Caco-2 (cell line): ENCODE measurements at regions of chr2 and their contacts with region 1.

Region 1: DNA sequence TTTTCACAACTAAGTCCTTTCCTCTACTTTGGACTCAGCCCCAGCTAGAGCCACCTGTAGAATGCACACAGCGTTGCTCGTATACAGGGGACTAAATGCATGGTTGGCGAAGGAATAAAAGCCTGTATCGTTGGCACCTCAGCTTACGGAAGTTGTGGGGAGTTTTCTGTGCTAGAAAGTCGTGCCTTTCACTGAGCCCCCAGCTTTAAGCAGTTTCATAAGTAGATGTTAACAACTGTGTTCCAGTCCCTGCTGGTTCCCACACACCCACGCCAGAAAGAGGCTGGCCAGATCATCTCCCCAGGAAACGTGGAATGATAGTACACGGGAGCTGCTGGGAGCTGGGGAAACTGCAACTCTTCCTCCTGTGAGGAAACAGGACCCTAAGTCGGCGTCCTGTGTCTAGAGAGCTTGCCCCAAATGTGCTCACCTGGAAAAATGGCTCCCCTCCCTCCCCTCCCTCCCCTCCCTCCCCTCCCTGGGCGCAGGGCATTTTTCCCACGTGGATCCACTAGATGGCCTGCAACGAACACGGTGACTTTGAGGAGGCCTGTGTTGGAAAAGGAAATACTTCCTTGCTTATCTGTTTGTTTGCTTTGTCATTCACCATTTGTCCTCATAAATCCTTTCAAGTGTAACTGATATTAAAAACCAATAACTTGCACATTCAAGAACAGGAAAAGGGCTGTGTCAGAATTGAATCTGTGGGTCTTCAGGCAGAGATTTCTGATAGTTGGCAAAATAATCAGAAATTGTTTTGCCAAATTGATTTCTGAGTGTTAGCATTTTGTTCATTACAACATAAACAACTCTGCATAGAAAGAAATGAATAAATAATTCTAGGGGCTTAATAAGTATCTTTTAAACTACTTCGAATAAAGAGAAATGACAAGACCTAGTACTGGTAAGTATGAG is 43.9 kb upstream of the RFX8 start:
- DNase-seq: peak; percentile 75 to 77
- H3K4me3 ChIP-seq: peak overlapping the region; percentile 20
- H3K4me3 Mint-ChIP-seq: peak overlapping the region; percentile 38
- H3K27ac Mint-ChIP-seq: no peak overlapping the region
- H3K4me1 ChIP-seq: peaks cover 23% of the 10 kb centered on the region; the same call in 1 of the 2 replicates
- H3K4me1 Mint-ChIP-seq: peaks cover 22% of the 10 kb centered on the region
- H3K27me3 ChIP-seq: no peaks in the 10 kb centered on the region
- H3K27me3 Mint-ChIP-seq: no peaks in the 10 kb centered on the region
- CTCF ChIP-seq: peak; percentile 66 to 80

Region 2: DNA sequence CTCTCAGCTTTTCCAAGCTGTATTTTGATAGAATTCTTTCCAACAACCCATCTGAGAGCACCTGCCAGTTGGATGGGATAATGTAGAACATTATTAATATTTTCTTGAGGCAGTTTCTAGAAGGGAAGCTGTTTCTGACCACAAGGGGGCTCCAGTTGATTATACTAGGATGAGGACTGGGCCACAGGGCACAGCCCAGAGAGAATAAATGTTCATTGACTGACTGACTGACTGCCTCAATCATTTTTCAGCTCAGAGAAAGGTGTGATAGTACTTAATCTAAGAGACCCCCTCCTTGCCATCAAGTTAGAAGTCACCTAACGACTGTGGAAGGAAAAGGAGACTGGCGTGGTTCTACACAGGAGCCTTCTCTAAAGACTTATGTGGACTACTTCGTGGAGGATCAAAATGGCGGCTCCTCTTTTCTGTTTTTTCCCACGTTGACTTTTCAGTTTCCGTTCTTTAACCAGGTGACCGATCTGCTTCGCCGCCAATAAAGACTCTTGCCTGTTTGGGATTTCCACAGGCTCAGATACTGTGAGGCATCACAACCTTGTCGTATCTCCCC is 99.7 kb before region 1 on chr2:
- CTCF ChIA-PET with region 1: no interaction called
- POLR2A ChIA-PET with region 1: no interaction called
- intact Hi-C with region 1: loop called (anchors 1 kb)
- DNase-seq: peak in 1 of 2 experiments; percentile 69
- H3K4me3 ChIP-seq: no peak overlapping the region
- H3K4me3 Mint-ChIP-seq: no peak overlapping the region
- H3K27ac Mint-ChIP-seq: no peak overlapping the region
- H3K4me1 ChIP-seq: no peaks in the 10 kb centered on the region
- H3K4me1 Mint-ChIP-seq: no peaks in the 10 kb centered on the region
- H3K27me3 ChIP-seq: no peaks in the 10 kb centered on the region
- H3K27me3 Mint-ChIP-seq: no peaks in the 10 kb centered on the region
- CTCF ChIP-seq: peak; percentile 61

Region 3: GRCh38 chr2:101461381-101461780 is 57.5 kb before region 1 on chr2:
- CTCF ChIA-PET with region 1: no interaction called
- POLR2A ChIA-PET with region 1: no interaction called
- intact Hi-C with region 1: no loop called
- DNase-seq: no peak
- H3K4me3 ChIP-seq: no peak overlapping the region
- H3K4me3 Mint-ChIP-seq: no peak overlapping the region
- H3K27ac Mint-ChIP-seq: no peak overlapping the region
- H3K4me1 ChIP-seq: no peaks in the 10 kb centered on the region
- H3K4me1 Mint-ChIP-seq: peaks cover 6% of the 10 kb centered on the region
- H3K27me3 ChIP-seq: no peaks in the 10 kb centered on the region
- H3K27me3 Mint-ChIP-seq: no peaks in the 10 kb centered on the region
- CTCF ChIP-seq: no peak

Region 4: GRCh38 chr2:101597351-101597944 is 78.6 kb after region 1 on chr2:
- CTCF ChIA-PET with region 1: interaction called, 3 read pairs
- POLR2A ChIA-PET with region 1: no interaction called
- intact Hi-C with region 1: loop called (anchors 2 kb)
- DNase-seq: peak; percentile 69 to 77
- H3K4me3 ChIP-seq: no peak overlapping the region
- H3K4me3 Mint-ChIP-seq: peak overlapping the region; percentile 10
- H3K27ac Mint-ChIP-seq: peak overlapping the region; percentile 37
- H3K4me1 ChIP-seq: peaks cover 20% of the 10 kb centered on the region
- H3K4me1 Mint-ChIP-seq: peaks cover 34% of the 10 kb centered on the region
- H3K27me3 ChIP-seq: no peaks in the 10 kb centered on the region
- H3K27me3 Mint-ChIP-seq: no peaks in the 10 kb centered on the region
- CTCF ChIP-seq: no peak

Region 5: GRCh38 chr2:101697124-101698013 is 178.5 kb after region 1 on chr2 and contains the start of gene MAP4K4:
- CTCF ChIA-PET with region 1: no interaction called
- POLR2A ChIA-PET with region 1: no interaction called
- intact Hi-C with region 1: loop called (anchors 2 kb)
- DNase-seq: peak; percentile 86 to 87
- H3K4me3 ChIP-seq: peak within 1 kb of the TSS; percentile 47
- H3K4me3 Mint-ChIP-seq: no peak within 1 kb of the TSS
- H3K27ac Mint-ChIP-seq: peak within 1 kb of the TSS; percentile 82
- H3K4me1 ChIP-seq: peaks cover 27% of the 10 kb centered on the region
- H3K4me1 Mint-ChIP-seq: peaks cover 17% of the 10 kb centered on the region
- H3K27me3 ChIP-seq: no peaks in the 10 kb centered on the region
- H3K27me3 Mint-ChIP-seq: no peaks in the 10 kb centered on the region
- CTCF ChIP-seq: peak in 1 of 2 experiments; percentile 25
- total RNA-seq, gene MAP4K4: 257 and 263 TPM in 2 replicates

Region 6: DNA sequence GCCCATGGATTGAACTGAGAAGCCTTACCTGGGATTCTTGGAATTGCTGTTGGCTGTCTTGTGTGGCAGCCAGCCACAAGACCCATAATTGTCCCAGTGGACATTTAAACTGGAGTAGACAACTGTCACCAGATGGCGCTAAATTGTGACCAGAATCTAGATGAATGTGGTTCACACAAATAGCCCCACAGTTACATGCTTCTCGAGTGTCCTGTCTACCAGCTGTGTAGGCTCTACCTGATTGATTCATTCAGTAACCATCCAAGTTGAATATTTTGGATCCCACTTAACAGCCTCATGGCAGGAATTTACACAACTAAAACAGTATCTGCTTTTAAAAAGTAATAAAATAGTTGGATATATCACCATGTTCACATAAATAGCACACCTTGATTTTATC is 251.9 kb after region 1 on chr2:
- CTCF ChIA-PET with region 1: no interaction called
- POLR2A ChIA-PET with region 1: no interaction called
- intact Hi-C with region 1: loop called (anchors 2 kb)
- DNase-seq: peak; percentile 67 to 70
- H3K4me3 ChIP-seq: no peak overlapping the region
- H3K4me3 Mint-ChIP-seq: no peak overlapping the region
- H3K27ac Mint-ChIP-seq: peak overlapping the region; percentile 72
- H3K4me1 ChIP-seq: peaks cover 50% of the 10 kb centered on the region
- H3K4me1 Mint-ChIP-seq: peaks cover 56% of the 10 kb centered on the region
- H3K27me3 ChIP-seq: no peaks in the 10 kb centered on the region
- H3K27me3 Mint-ChIP-seq: no peaks in the 10 kb centered on the region
- CTCF ChIP-seq: peak; percentile 43 to 56

Region 7: DNA sequence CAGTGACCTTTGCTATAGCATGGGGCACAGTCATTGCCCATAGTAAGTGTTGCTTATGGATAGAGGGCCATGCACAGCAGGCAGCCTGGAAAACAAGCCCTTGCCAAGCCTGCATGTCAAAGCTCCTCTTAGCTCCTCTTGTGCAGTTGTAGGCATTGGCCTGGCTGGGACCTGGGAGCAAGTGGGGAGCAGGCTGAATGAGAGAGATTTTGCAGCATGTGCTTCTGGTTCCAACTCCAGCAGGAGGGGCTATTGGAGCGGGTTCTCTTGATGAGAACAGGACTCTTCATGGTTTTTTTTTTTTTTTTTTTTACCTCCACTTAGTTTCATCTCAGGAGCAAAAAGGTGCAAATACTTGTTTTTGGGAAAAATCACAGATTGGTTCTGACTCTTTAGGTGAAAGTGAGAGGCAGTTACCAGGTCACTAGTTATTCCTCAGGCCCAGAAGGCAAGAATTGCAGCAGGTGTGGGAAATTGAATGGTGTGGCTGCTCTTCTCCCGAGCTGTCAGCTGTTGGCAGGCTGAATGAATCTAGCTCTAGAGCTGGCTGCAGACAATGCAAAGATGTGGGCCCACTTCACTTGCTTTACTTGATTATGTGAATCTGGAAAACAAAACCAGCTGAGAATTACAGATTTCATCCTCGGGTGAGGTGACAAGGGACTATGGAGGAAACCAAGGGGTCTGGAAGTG is 274.6 kb after region 1 on chr2:
- CTCF ChIA-PET with region 1: no interaction called
- POLR2A ChIA-PET with region 1: no interaction called
- intact Hi-C with region 1: loop called (anchors 1 kb)
- DNase-seq: peak in 1 of 2 experiments; percentile 30
- H3K4me3 ChIP-seq: no peak overlapping the region
- H3K4me3 Mint-ChIP-seq: no peak overlapping the region
- H3K27ac Mint-ChIP-seq: no peak overlapping the region
- H3K4me1 ChIP-seq: peaks cover 19% of the 10 kb centered on the region
- H3K4me1 Mint-ChIP-seq: peaks cover 26% of the 10 kb centered on the region
- H3K27me3 ChIP-seq: no peaks in the 10 kb centered on the region
- H3K27me3 Mint-ChIP-seq: no peaks in the 10 kb centered on the region
- CTCF ChIP-seq: peak in 1 of 2 experiments; percentile 37

Region 8: GRCh38 chr2:101831351-101831865 is 312.6 kb after region 1 on chr2:
- CTCF ChIA-PET with region 1: no interaction called
- POLR2A ChIA-PET with region 1: no interaction called
- intact Hi-C with region 1: loop called (anchors 1 kb)
- DNase-seq: peak; percentile 80
- H3K4me3 ChIP-seq: no peak overlapping the region
- H3K4me3 Mint-ChIP-seq: no peak overlapping the region
- H3K27ac Mint-ChIP-seq: peak overlapping the region; percentile 66
- H3K4me1 ChIP-seq: peaks cover 33% of the 10 kb centered on the region
- H3K4me1 Mint-ChIP-seq: peaks cover 41% of the 10 kb centered on the region
- H3K27me3 ChIP-seq: no peaks in the 10 kb centered on the region
- H3K27me3 Mint-ChIP-seq: no peaks in the 10 kb centered on the region
- CTCF ChIP-seq: peak; percentile 64 to 90